ENCODE measurements at regions of chr13 and their contacts with region 1.

Region 1: GRCh38 chr13:19782049-19782726 is 557 bp downstream of the PSPC1 start:
- DNase-seq: peak; percentile 75
- ATAC-seq: peak; percentile 45
- H3K4me3 Mint-ChIP-seq: peak overlapping the region; percentile 94
- H3K27ac Mint-ChIP-seq: peak overlapping the region; percentile 98
- H3K4me1 Mint-ChIP-seq: peaks cover 5% of the 10 kb centered on the region
- H3K27me3 Mint-ChIP-seq: no peaks in the 10 kb centered on the region

Region 2: GRCh38 chr13:19607523-19608078 is 174.6 kb before region 1 on chr13:
- CTCF ChIA-PET with region 1: no interaction called
- POLR2A ChIA-PET with region 1: no interaction called
- intact Hi-C with region 1: no loop called
- DNase-seq: no peak
- ATAC-seq: no peak
- H3K4me3 Mint-ChIP-seq: no peak overlapping the region
- H3K27ac Mint-ChIP-seq: no peak overlapping the region
- H3K4me1 Mint-ChIP-seq: no peaks in the 10 kb centered on the region
- H3K27me3 Mint-ChIP-seq: peaks cover 22% of the 10 kb centered on the region

Region 3: DNA sequence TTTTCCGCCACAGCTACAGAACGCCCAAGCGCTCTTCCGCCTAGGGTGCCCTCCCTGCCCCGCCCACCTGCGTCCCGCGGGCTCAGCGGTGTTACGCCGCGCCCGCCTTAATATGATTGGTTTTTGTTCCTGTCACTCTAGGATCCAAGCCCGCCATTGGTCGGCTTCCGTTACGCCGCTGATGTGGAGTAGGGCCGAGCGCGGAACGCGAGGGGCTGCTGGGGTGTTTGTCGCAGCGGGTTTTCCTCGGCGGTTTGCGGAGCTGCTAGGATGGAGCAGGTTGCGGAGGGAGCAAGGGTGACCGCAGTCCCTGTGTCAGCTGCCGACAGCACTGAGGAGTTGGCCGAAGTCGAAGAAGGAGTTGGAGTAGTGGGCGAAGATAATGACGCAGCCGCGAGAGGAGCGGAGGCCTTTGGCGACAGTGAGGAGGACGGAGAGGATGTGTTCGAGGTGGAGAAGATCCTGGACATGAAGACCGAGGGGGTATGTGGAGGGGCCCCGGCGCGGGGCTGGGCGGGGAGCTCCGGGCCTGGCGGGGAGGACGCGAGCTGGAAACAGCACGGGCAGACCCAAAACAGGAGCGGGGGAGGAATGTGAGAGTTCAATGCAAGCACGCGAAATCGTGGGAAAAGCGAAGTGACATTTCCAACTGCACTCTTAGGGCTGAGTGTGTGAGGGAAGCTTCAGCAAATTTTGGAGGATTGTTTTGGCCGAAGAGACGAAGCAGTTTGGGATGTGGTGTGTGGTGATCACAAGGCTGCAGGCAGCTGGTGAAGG is 148.5 kb before region 1 on chr13 and contains the start of gene MPHOSPH8:
- CTCF ChIA-PET with region 1: no interaction called
- POLR2A ChIA-PET with region 1: no interaction called
- intact Hi-C with region 1: loop called (anchors 1 to 5 kb)
- DNase-seq: peak; percentile 96
- ATAC-seq: peak; percentile 98
- H3K4me3 Mint-ChIP-seq: peak within 1 kb of the TSS; percentile 99
- H3K27ac Mint-ChIP-seq: peak within 1 kb of the TSS; percentile 99
- H3K4me1 Mint-ChIP-seq: peaks cover 27% of the 10 kb centered on the region
- H3K27me3 Mint-ChIP-seq: no peaks in the 10 kb centered on the region
- total RNA-seq, gene MPHOSPH8: 39.1 to 39.8 TPM